Thyroid gland (tissue), 4 donors: ENCODE measurements at regions of chr20 and their contacts with region 1.

Region 1: GRCh38 chr20:50575847-50576720 is 65.9 kb downstream of the PTPN1 start:
- DNase-seq: peak; percentile 73 to 75
- H3K4me3 ChIP-seq: no peak overlapping the region
- H3K27ac ChIP-seq: peak overlapping the region in 1 of 3 donors; percentile 34
- H3K4me1 ChIP-seq: peaks cover 18 to 34% of the 10 kb centered on the region in 2 donors
- H3K27me3 ChIP-seq: no peaks in the 10 kb centered on the region
- CTCF ChIP-seq: peak; percentile 29 to 75 (median 64)
- POLR2A ChIP-seq: no peak

Region 2: GRCh38 chr20:50478162-50479036 is 97.7 kb before region 1 on chr20:
- intact Hi-C with region 1: loop called (anchors 5 kb)
- DNase-seq: peak; percentile 63 to 74
- H3K4me3 ChIP-seq: no peak overlapping the region
- H3K27ac ChIP-seq: no peak overlapping the region
- H3K4me1 ChIP-seq: peaks cover 0 to 14% of the 10 kb centered on the region in 2 donors
- H3K27me3 ChIP-seq: no peaks in the 10 kb centered on the region
- CTCF ChIP-seq: peak; percentile 18 to 73 (median 64)
- POLR2A ChIP-seq: no peak

Region 3: GRCh38 chr20:50509935-50510705 is 66.0 kb before region 1 on chr20 and contains the start of gene PTPN1:
- intact Hi-C with region 1: loop called (anchors 10 kb)
- DNase-seq: peak; percentile 99
- H3K4me3 ChIP-seq: peak within 1 kb of the TSS; percentile 87 to 98 (median 93)
- H3K27ac ChIP-seq: peak within 1 kb of the TSS; percentile 67 to 81 (median 70)
- H3K4me1 ChIP-seq: peaks cover 34 to 41% of the 10 kb centered on the region in 2 donors
- H3K27me3 ChIP-seq: no peaks in the 10 kb centered on the region
- CTCF ChIP-seq: peak in 2 of 6 experiments; percentile 5 to 25
- POLR2A ChIP-seq: peak; percentile 77 to 99
- total RNA-seq, gene PTPN1: 20.5 to 28.8 (median 24.9) TPM

Region 4: GRCh38 chr20:50613438-50614169 is 37.5 kb after region 1 on chr20:
- intact Hi-C with region 1: no loop called
- DNase-seq: no peak
- H3K4me3 ChIP-seq: no peak overlapping the region
- H3K27ac ChIP-seq: no peak overlapping the region
- H3K4me1 ChIP-seq: no peaks in the 10 kb centered on the region
- H3K27me3 ChIP-seq: no peaks in the 10 kb centered on the region
- CTCF ChIP-seq: no peak
- POLR2A ChIP-seq: no peak